ENCODE measurements at regions of chr3 and their contacts with region 1.

Region 1: GRCh38 chr3:171646357-171647133 is 163.7 kb downstream of the PLD1 start:
- DNase-seq: peak; percentile 46
- H3K4me3 ChIP-seq: no peak overlapping the region
- H3K27ac ChIP-seq: no peak overlapping the region
- H3K4me1 ChIP-seq: no peaks in the 10 kb centered on the region
- H3K27me3 ChIP-seq: no peaks in the 10 kb centered on the region
- CTCF ChIP-seq: peak; percentile 57 to 66

Region 2: DNA sequence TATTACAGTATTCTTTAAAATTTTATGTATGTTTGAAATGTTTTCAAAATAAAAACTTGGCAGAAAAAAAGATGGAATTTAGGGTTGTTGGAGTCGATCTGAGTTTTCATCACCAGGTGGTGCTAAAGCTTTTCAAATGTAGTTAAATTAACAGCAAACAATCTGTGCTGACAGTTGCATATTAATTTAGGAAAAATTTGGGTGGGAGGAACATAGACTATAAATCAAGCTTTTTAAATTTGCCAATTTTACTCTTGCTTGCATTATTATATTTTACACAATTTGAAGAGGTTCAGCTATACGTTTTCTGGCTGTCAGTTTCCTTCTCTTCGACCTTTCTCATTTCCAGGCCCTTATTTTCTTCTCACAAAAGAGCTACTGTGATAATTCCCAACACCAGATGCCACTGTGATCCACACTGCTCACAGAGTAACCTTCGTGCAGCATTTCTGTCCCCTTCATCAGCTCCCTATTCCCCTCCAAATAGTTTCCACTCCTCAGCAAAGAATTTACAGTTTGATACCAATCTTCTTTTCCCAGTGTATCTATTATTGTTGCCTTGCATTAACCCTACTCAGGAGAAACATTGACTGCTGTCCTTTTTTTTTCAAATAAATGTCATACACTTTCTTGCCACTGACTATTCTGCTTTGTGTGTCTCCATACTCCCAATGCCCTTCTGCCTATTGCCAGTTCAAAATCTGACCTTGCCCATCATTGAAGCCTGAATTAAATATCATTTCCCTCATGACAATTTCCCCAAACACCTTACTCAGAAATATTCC is 684.7 kb before region 1 on chr3:
- CTCF ChIA-PET with region 1: no interaction called
- dilution Hi-C with region 1: no loop called
- in situ Hi-C with region 1: no loop called
- intact Hi-C with region 1: loop called (anchors 5 kb)
- DNase-seq: peak; percentile 12
- H3K4me3 ChIP-seq: no peak overlapping the region
- H3K27ac ChIP-seq: no peak overlapping the region
- H3K4me1 ChIP-seq: no peaks in the 10 kb centered on the region
- H3K27me3 ChIP-seq: no peaks in the 10 kb centered on the region
- CTCF ChIP-seq: peak; percentile 49 to 58

Region 3: GRCh38 chr3:171658841-171659240 is 12.3 kb after region 1 on chr3:
- CTCF ChIA-PET with region 1: no interaction called
- dilution Hi-C with region 1: no loop called
- in situ Hi-C with region 1: no loop called
- intact Hi-C with region 1: no loop called
- DNase-seq: no peak
- H3K4me3 ChIP-seq: no peak overlapping the region
- H3K27ac ChIP-seq: no peak overlapping the region
- H3K4me1 ChIP-seq: peaks cover 16% of the 10 kb centered on the region
- H3K27me3 ChIP-seq: no peaks in the 10 kb centered on the region
- CTCF ChIP-seq: no peak

Region 4: DNA sequence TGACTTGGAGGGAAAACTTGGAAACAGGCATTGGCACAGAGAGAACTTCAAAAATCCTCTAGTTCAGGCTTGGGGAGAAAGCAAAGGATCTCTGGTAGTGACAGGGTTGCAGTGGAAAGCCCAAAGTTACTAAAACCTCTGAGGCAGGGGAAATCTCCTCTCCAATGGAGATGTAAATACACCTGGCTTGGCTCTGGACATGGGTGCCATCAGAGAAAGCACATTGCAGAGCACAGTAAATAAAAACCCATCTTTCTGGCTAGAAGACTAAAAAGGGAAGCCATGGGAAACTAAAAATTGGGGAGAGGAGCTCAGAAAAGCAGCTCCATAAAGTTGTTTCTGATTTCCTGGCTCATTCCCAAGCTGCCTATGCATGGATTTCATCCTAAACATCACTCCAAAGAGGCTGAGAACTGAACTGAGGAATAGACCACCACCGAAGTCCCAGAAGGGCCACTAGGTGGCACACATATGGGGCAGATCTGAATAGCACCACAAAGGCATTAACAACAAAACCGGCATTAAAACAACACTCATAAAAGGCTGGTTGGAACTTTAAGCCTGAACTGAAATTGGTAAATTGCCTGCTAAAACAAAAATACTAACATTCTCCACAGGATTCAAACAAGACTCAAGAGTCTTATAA is 57.3 kb after region 1 on chr3:
- CTCF ChIA-PET with region 1: no interaction called
- dilution Hi-C with region 1: no loop called
- in situ Hi-C with region 1: no loop called
- intact Hi-C with region 1: loop called (anchors 2 kb)
- DNase-seq: peak; percentile 49
- H3K4me3 ChIP-seq: no peak overlapping the region
- H3K27ac ChIP-seq: no peak overlapping the region
- H3K4me1 ChIP-seq: no peaks in the 10 kb centered on the region
- H3K27me3 ChIP-seq: no peaks in the 10 kb centered on the region
- CTCF ChIP-seq: peak; percentile 71 to 80

Region 5: DNA sequence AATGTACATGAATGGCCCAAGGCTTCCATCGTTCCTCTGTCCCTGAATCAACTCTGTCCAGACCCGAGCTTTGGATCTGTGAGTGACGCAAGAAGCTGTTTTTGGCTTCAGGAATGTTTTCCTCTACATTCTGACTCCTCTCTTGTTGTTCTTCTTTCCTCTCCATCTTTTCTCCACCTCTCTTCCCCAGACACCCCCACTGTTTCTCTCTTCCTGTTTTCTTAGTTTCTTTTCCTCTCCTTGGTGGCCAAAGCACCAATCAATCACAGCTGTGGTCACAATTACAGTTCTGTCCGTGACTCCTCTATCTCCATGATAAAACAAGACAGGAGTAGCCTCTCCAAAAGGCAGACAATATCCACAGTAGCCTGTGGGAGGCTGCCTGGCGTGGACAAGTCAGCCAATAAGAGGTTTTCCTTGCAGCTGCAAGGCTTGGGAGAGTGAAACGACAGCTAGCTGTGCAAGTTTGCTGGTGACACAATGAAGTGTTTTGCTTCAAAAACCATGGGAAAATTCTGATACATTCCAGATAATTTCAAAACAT is 191.7 kb after region 1 on chr3:
- CTCF ChIA-PET with region 1: interaction called, 5 read pairs
- dilution Hi-C with region 1: no loop called
- in situ Hi-C with region 1: loop called in 1 of 2 experiments (anchors 5 kb)
- intact Hi-C with region 1: loop called (anchors 1 kb)
- DNase-seq: peak; percentile 23
- H3K4me3 ChIP-seq: no peak overlapping the region
- H3K27ac ChIP-seq: no peak overlapping the region
- H3K4me1 ChIP-seq: peaks cover 5% of the 10 kb centered on the region
- H3K27me3 ChIP-seq: no peaks in the 10 kb centered on the region
- CTCF ChIP-seq: no peak

Region 6: GRCh38 chr3:172029425-172030098 is 383.0 kb after region 1 on chr3:
- CTCF ChIA-PET with region 1: no interaction called
- dilution Hi-C with region 1: no loop called
- in situ Hi-C with region 1: no loop called
- intact Hi-C with region 1: no loop called
- DNase-seq: no peak
- H3K4me3 ChIP-seq: no peak overlapping the region
- H3K27ac ChIP-seq: no peak overlapping the region
- H3K4me1 ChIP-seq: no peaks in the 10 kb centered on the region
- H3K27me3 ChIP-seq: no peaks in the 10 kb centered on the region
- CTCF ChIP-seq: no peak

Region 7: GRCh38 chr3:172332256-172333041 is 685.9 kb after region 1 on chr3:
- CTCF ChIA-PET with region 1: no interaction called
- dilution Hi-C with region 1: no loop called
- in situ Hi-C with region 1: no loop called
- intact Hi-C with region 1: loop called (anchors 10 kb)
- DNase-seq: peak; percentile 50
- H3K4me3 ChIP-seq: no peak overlapping the region
- H3K27ac ChIP-seq: no peak overlapping the region
- H3K4me1 ChIP-seq: peaks cover 8% of the 10 kb centered on the region
- H3K27me3 ChIP-seq: no peaks in the 10 kb centered on the region
- CTCF ChIP-seq: peak; percentile 89 to 97

Measured in mammary epithelial cell (primary cell).